Thyroid gland (tissue), 4 donors: ENCODE measurements at regions of chr19 and their contacts with region 1.

Region 1: GRCh38 chr19:58305065-58305931 is at the start of gene ERVK3-1:
- DNase-seq: peak; percentile 96 to 97
- H3K4me3 ChIP-seq: peak within 1 kb of the TSS; percentile 44 to 88 (median 46)
- H3K27ac ChIP-seq: peak within 1 kb of the TSS; percentile 36 to 76 (median 72)
- H3K4me1 ChIP-seq: peaks cover 5 to 13% of the 10 kb centered on the region in 2 donors
- H3K27me3 ChIP-seq: no peaks in the 10 kb centered on the region
- CTCF ChIP-seq: peak in 4 of 6 experiments; percentile 35 to 48 (median 45)
- POLR2A ChIP-seq: peak in 1 of 2 donors; percentile 86
- total RNA-seq, gene ERVK3-1: 56.3 to 87.2 (median 64.5) TPM

Region 2: DNA sequence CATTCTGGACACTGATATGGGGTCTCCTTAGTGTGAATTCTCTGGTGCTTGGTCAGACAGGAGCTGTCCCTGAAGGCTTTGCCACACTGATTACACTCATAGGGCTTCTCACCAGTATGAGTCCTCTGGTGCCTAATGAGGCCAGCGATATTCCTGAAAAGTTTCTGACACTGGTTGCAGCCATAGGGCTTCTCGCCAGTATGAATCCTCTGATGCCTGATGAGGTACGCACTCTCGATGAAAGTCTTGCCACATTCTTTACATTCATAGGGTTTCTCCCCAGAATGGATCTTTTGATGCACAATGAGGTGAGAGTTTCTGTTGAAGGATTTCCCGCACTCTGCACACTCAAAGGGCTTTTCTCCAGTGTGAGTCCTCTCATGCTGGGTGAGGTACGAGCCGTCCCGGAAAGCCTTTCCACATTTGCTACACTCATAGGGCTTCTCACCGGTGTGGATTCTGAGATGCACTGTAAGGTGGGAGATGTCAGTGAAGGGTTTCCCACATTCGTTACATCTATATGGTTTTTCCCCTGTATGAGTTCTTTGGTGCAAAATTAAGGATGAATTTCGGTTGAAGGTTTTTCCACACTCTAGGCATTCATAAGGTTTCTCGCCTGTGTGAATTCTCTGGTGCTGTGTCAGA is 177.1 kb before region 1 on chr19:
- intact Hi-C with region 1: no loop called
- DNase-seq: no peak
- H3K4me3 ChIP-seq: no peak overlapping the region
- H3K27ac ChIP-seq: no peak overlapping the region
- H3K4me1 ChIP-seq: no peaks in the 10 kb centered on the region
- H3K27me3 ChIP-seq: no peaks in the 10 kb centered on the region
- CTCF ChIP-seq: no peak
- POLR2A ChIP-seq: no peak

Region 3: GRCh38 chr19:58228585-58229254 is 76.6 kb before region 1 on chr19 and contains the start of gene ZNF544:
- intact Hi-C with region 1: loop called (anchors 10 kb)
- DNase-seq: peak; percentile 79 to 83
- H3K4me3 ChIP-seq: peak within 1 kb of the TSS; percentile 47 to 86 (median 72)
- H3K27ac ChIP-seq: peak within 1 kb of the TSS; percentile 37 to 85 (median 76)
- H3K4me1 ChIP-seq: peaks cover 12 to 13% of the 10 kb centered on the region in 2 donors
- H3K27me3 ChIP-seq: no peaks in the 10 kb centered on the region
- CTCF ChIP-seq: peak in 1 of 6 experiments; percentile 11
- POLR2A ChIP-seq: peak in 1 of 2 donors; percentile 73
- total RNA-seq, gene ZNF544: 64.7 to 103 (median 76.5) TPM

Region 4: GRCh38 chr19:58284199-58284598 is 21.1 kb before region 1 on chr19:
- intact Hi-C with region 1: no loop called
- DNase-seq: no peak
- H3K4me3 ChIP-seq: no peak overlapping the region
- H3K27ac ChIP-seq: no peak overlapping the region
- H3K4me1 ChIP-seq: peaks cover 6 to 11% of the 10 kb centered on the region in 2 donors
- H3K27me3 ChIP-seq: no peaks in the 10 kb centered on the region
- CTCF ChIP-seq: no peak
- POLR2A ChIP-seq: no peak

Region 5: GRCh38 chr19:58380722-58381466 is 75.6 kb after region 1 on chr19 and contains the start of gene ZNF837:
- intact Hi-C with region 1: no loop called
- DNase-seq: peak; percentile 99
- H3K4me3 ChIP-seq: peak within 1 kb of the TSS; percentile 47 to 74 (median 70)
- H3K27ac ChIP-seq: peak within 1 kb of the TSS; percentile 88 to 96 (median 92)
- H3K4me1 ChIP-seq: peaks cover 20 to 30% of the 10 kb centered on the region in 2 donors
- H3K27me3 ChIP-seq: no peaks in the 10 kb centered on the region
- CTCF ChIP-seq: peak in 2 of 6 experiments; percentile 36 to 41
- POLR2A ChIP-seq: peak; percentile 80 to 90
- total RNA-seq, gene ZNF837: 6.3 to 16.4 (median 15.1) TPM

Region 6: DNA sequence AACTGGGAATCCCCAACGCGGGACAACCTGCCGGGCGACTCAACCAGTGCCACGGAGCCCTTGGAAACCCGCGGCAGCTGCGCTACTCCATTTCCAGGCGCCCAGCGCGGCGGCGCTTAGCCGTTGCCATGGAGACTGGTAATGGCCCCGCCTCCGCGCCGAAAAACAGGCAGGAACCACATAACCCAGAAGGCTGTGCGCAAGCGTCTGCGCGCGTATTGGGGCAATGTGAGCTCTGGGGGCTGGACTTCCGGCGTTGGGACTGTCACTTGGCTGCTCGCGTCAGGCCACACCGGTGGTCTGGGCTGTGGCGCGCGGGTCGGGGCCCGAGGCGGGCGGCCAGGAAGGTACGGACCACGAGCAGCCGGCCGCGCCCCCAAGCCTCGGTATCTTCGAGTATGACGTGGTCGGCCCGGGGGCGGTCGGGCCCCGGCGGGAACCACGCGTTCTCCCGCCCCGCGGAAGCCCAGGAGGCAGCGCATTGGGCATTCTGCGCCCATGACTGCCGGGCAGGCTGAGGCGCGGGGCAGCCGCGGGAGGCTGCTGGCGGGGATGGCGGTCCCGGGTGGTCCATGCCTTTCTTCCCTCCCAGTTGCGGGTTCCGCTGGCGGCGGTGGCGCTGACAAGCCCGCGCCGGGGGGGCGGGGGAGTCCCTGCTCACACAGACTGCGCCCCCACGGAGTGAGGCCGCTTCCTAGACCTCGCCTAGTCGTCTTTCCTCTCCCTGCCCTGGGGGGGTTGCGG is 146.2 kb after region 1 on chr19 and contains the start of gene ZNF324B:
- intact Hi-C with region 1: no loop called
- DNase-seq: peak; percentile 99
- H3K4me3 ChIP-seq: peak within 1 kb of the TSS; percentile 39 to 81 (median 73)
- H3K27ac ChIP-seq: no peak within 1 kb of the TSS
- H3K4me1 ChIP-seq: peaks cover 7 to 9% of the 10 kb centered on the region in 2 donors
- H3K27me3 ChIP-seq: no peaks in the 10 kb centered on the region
- CTCF ChIP-seq: peak in 1 of 6 experiments; percentile 4
- POLR2A ChIP-seq: peak in 1 of 2 donors; percentile 70
- total RNA-seq, gene ZNF324B: 10.6 to 16.8 (median 13.4) TPM